ENCODE measurements at regions of chr16 and their contacts with region 1.

Region 1: GRCh38 chr16:75198135-75198600 is 8.8 kb downstream of the CTRB2 start:
- DNase-seq: peak; percentile 32
- H3K4me3 ChIP-seq: 0 out of 2 replicates have a peak overlapping the region, but pooled peaks have one; percentile 3
- H3K27me3 ChIP-seq: peaks cover 3% of the 10 kb centered on the region; the same call in 1 of the 2 replicates
- CTCF ChIP-seq: no peak

Region 2: DNA sequence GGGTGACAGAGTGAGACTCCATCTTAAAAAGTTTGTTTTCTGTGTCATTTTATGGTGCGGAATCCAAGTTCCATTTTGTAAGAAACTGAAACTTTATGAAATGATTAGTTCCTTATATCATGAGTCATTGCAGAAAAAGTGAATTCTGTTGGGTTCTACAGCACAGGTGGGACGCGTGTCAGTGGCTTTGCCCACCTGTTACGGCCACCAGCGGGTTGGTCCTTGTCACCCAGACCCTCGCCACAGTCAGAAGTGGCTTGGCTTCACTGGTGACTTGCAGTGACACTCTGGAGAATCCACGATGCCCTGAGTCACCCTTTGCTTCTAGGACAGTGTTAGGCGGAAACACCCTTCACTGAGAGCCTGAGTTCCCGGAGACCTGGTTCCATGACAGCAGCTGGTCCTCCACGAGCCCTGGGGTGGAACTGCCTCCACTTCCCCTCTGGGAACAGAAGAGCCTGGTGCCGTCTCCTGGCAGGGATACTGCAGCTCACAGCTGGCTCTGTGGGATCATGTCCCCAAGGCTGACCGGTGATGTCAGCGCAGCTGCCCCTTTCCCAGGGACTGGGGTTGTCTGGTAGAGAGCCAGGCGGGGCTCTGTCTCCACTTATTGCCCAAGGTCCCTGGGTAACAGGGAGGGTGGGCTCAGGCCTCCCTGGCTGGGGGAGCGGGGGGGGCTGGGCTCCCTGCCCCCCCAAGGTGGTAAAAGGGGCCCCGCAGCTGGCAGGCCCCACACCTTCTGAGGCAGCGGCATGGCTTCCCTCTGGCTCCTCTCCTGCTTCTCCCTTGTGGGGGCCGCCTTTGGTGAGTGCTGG is 20.3 kb after region 1 on chr16 and contains the start of gene CTRB1:
- CTCF ChIA-PET with region 1: interaction called, 16 read pairs
- POLR2A ChIA-PET with region 1: no interaction called
- DNase-seq: no peak
- H3K4me3 ChIP-seq: no peak within 1 kb of the TSS
- H3K27me3 ChIP-seq: no peaks in the 10 kb centered on the region
- CTCF ChIP-seq: no peak
- polyA plus RNA-seq, gene CTRB1: not detected in 2 replicates

Region 3: GRCh38 chr16:75392911-75393310 is 194.7 kb after region 1 on chr16:
- CTCF ChIA-PET with region 1: interaction called, 67 read pairs
- POLR2A ChIA-PET with region 1: no interaction called
- DNase-seq: no peak
- H3K4me3 ChIP-seq: no peak overlapping the region
- H3K27me3 ChIP-seq: no peaks in the 10 kb centered on the region
- CTCF ChIP-seq: no peak

Region 4: GRCh38 chr16:75432828-75433731 is 234.9 kb after region 1 on chr16 and contains the start of gene CFDP1:
- CTCF ChIA-PET with region 1: interaction called, 10 read pairs
- POLR2A ChIA-PET with region 1: no interaction called
- DNase-seq: peak; percentile 52
- H3K4me3 ChIP-seq: peak within 1 kb of the TSS; percentile 99
- H3K27me3 ChIP-seq: no peaks in the 10 kb centered on the region
- CTCF ChIP-seq: no peak
- polyA plus RNA-seq, gene CFDP1: 10.9 and 38.6 TPM in 2 replicates

Region 5: DNA sequence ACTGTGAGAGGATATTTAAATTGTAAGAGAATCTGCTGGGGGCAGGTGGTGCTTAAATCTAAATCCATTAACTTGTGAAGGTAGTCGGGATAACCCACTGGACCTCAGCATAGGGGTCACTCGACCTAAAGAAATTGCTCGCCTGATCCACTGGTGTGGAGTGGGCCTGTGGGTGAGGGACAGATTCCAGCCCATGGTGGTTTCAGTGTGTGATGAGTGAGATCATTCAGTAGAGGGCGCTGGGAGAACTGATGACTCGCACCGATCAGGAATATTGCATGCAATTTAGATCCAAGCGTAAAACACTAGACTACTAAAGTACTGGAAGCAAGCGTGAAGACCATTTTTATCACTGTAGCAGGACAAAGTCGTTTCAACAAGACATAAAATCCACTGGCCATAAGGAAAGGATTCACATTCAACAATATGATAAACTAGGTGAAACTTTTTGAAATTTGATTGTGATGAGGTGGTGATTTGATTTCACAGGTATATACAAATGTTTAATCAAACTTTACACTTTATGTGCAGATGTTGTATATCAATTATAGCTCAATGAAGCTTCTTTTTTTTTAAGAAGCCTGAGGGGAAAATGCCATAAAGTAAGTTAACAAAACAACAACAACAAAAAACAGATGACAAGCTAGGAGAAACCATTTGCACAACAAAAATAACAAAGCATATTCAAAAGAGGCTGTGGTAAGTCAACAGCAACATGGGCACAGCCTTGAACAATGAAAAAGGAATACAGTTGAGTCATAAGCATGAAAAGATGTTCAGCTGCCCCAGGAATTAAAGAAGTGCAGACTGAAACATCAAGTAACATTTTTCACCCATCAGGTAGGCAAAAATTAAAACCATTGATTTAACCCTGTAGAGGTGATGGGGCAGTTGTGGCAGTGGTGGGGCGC is 273.8 kb after region 1 on chr16:
- CTCF ChIA-PET with region 1: interaction called, 52 read pairs
- POLR2A ChIA-PET with region 1: no interaction called
- DNase-seq: no peak
- H3K4me3 ChIP-seq: no peak overlapping the region
- H3K27me3 ChIP-seq: no peaks in the 10 kb centered on the region
- CTCF ChIP-seq: peak; percentile 78

Measured in BJ (cell line).